ENCODE measurements at regions of chr21 and their contacts with region 1.

Region 1: DNA sequence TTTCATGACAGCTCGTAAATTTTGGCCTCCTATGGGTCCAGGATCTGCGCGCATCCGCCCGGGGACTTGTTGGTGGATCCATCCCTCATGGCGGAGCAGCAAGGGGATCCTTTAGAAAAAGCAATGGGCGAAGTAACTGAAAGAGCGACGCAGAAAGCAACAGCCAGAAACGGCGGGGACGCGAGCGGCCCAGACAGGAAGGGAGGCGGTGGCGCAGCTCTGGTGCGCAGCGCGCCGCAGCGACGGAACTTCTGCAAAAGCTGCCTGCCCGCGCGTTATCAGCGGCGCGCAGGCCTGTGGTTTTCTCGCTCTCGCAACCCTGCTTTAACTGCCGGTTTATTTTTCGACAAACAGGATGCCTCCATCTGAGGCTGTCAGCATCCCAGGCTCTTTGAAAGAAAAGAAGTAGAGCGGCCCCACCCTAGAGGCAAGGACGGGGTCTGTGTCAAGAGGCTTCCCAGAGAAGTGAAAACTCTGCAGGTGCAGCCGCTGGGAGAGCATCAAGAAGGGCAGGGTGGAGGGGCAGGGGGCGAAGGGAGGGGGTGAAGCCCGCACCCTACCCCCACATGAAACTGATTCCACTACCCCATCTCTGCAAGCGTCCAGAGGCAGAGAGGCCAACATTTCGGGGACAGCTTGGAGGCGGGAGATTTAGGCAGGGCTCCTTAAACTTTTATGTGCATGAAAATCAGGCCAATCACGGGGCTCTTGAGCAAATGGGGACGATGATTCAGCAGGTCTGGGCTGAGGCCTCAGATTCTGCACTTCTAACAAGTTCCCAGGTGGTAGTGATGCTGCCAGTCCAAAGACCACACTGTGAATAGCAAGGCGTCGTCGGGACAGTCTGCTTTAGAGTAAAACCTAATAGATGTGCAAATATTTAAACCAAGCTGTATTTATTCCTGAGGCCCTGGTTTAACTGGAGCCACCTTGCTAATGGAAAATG is 22.2 kb downstream of the RUNX1 start:
- DNase-seq: peak; percentile 90
- ATAC-seq: peak; percentile 91
- H3K4me3 ChIP-seq: peak overlapping the region; percentile 11 to 65 (median 53)
- H3K4me3 Mint-ChIP-seq: peak overlapping the region; percentile 92
- H3K27ac ChIP-seq: peak overlapping the region; percentile 46 to 87
- H3K27ac Mint-ChIP-seq: peak overlapping the region; percentile 99
- H3K4me1 ChIP-seq: peaks cover 42 to 45% of the 10 kb centered on the region in 2 donors
- H3K4me1 Mint-ChIP-seq: peaks cover 63% of the 10 kb centered on the region
- H3K27me3 ChIP-seq: no peaks in the 10 kb centered on the region
- H3K27me3 Mint-ChIP-seq: no peaks in the 10 kb centered on the region
- CTCF ChIP-seq: no peak

Region 2: GRCh38 chr21:34498623-34499022 is 528.3 kb before region 1 on chr21:
- CTCF ChIA-PET with region 1: no interaction called
- POLR2A ChIA-PET with region 1: no interaction called
- intact Hi-C with region 1: no loop called
- DNase-seq: no peak
- ATAC-seq: no peak
- H3K4me3 ChIP-seq: no peak overlapping the region
- H3K4me3 Mint-ChIP-seq: no peak overlapping the region
- H3K27ac ChIP-seq: no peak overlapping the region
- H3K27ac Mint-ChIP-seq: no peak overlapping the region
- H3K4me1 ChIP-seq: no peaks in the 10 kb centered on the region
- H3K4me1 Mint-ChIP-seq: no peaks in the 10 kb centered on the region
- H3K27me3 ChIP-seq: peaks cover 0 to 7% (median 0%) of the 10 kb centered on the region in 4 experiments
- H3K27me3 Mint-ChIP-seq: peaks cover 32% of the 10 kb centered on the region
- CTCF ChIP-seq: no peak

Region 3: GRCh38 chr21:34771512-34772028 is 255.3 kb before region 1 on chr21:
- CTCF ChIA-PET with region 1: no interaction called
- POLR2A ChIA-PET with region 1: no interaction called
- intact Hi-C with region 1: no loop called
- DNase-seq: no peak
- ATAC-seq: no peak
- H3K4me3 ChIP-seq: no peak overlapping the region
- H3K4me3 Mint-ChIP-seq: no peak overlapping the region
- H3K27ac ChIP-seq: no peak overlapping the region
- H3K27ac Mint-ChIP-seq: no peak overlapping the region
- H3K4me1 ChIP-seq: no peaks in the 10 kb centered on the region
- H3K4me1 Mint-ChIP-seq: no peaks in the 10 kb centered on the region
- H3K27me3 ChIP-seq: peaks cover 0 to 3% (median 0%) of the 10 kb centered on the region in 4 experiments
- H3K27me3 Mint-ChIP-seq: peaks cover 12% of the 10 kb centered on the region
- CTCF ChIP-seq: no peak

Region 4: GRCh38 chr21:34933609-34934335 is 93.1 kb before region 1 on chr21:
- CTCF ChIA-PET with region 1: no interaction called
- POLR2A ChIA-PET with region 1: no interaction called
- intact Hi-C with region 1: loop called (anchors 5 kb)
- DNase-seq: peak; percentile 76
- ATAC-seq: peak; percentile 98
- H3K4me3 ChIP-seq: peak overlapping the region; percentile 14 to 63 (median 43)
- H3K4me3 Mint-ChIP-seq: peak overlapping the region; percentile 83
- H3K27ac ChIP-seq: peak overlapping the region; percentile 83 to 92
- H3K27ac Mint-ChIP-seq: peak overlapping the region; percentile 93
- H3K4me1 ChIP-seq: peaks cover 37 to 40% of the 10 kb centered on the region in 2 donors
- H3K4me1 Mint-ChIP-seq: peaks cover 72% of the 10 kb centered on the region
- H3K27me3 ChIP-seq: no peaks in the 10 kb centered on the region
- H3K27me3 Mint-ChIP-seq: no peaks in the 10 kb centered on the region
- CTCF ChIP-seq: no peak